ENCODE measurements at regions of chr7 and their contacts with region 1.

Region 1: DNA sequence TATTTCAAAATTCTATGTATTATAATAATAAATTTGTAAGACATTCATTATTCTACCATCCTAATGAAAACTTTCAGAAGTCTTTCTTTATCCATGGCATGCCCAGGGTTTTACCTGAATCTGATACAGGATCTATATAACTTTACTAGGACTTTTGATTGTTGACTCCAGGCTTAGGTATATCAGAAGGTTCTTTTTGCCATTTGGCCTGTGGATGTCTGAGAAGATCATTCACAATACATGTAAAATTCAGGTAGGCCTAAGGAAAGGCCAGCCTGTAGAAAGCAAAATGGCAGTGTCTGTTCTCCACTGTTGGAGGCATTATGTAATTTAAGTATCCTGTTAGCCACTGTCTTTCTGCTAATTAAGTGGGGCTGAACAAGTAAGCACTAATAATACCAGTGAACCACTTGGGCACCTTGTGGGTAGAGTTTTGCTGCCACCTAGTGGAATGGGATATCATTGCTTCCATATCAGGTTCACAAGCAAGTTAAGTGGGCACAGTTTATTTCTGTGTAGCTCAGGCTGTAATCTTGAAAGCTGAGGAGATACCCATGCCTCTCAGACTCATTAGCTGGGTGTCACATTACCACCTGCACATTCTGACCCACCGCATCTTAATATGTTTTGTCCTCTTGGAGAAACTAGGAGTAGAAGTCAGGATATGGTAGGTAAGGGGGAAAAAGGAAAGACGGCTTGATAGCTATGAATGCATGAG is 105.5 kb downstream of the SEPTIN7 start:
- DNase-seq: peak in 39 of 42 donors; percentile 15 to 90 (median 72)

Region 2: GRCh38 chr7:35716038-35716803 is 190.1 kb before region 1 on chr7:
- intact Hi-C with region 1: loop called (anchors 5 kb)
- DNase-seq: peak in 41 of 42 donors; percentile 44 to 88 (median 71)

Region 3: GRCh38 chr7:35801392-35802101 is 104.8 kb before region 1 on chr7:
- intact Hi-C with region 1: loop called (anchors 10 kb)
- DNase-seq: peak; percentile 53 to 90 (median 78)

Region 4: GRCh38 chr7:35831208-35831607 is 75.1 kb before region 1 on chr7:
- intact Hi-C with region 1: no loop called
- DNase-seq: no peak

Region 5: DNA sequence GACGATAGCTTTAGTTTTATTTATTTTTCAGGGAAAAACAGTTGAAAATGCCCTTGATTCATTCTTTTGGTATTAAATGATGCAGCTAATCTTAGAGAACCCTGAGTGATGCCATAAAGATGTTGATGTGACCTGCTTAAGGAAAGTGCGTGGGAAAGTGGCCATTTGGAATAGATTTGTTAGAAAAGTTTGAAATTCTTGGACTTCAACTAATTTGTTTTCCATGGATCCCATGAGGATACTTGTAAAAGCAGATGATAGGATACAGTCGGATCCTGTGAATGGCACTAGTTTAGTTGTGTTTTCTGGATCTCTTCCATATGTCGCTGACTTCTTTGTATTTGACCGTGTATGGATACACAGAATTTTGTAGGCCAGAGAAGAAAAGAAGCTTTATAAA is 36.5 kb before region 1 on chr7:
- intact Hi-C with region 1: no loop called
- DNase-seq: no peak

Region 6: GRCh38 chr7:35975851-35976454 is 69.6 kb after region 1 on chr7:
- intact Hi-C with region 1: loop called (anchors 10 kb)
- DNase-seq: peak in 28 of 42 donors; percentile 20 to 87 (median 65)

Region 7: DNA sequence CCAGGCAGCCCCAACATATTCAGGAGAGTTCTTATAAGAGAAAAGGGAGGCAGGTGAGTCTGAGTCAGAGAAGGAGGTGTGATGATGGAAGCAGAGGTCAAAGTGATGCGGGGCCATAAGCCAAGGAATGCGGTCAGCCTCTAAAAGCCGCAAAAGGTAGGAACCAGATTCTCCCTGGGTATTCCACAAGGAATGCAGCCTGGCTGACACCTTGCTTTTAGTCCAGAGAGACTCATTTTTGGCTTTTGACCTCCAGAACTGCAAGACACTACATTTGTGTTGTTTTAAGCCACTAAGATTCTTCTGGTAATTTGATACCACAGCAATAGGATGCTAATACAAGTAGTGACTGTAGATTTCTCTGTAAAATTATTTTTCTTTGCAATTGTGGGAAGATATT is 95.2 kb after region 1 on chr7:
- intact Hi-C with region 1: no loop called
- DNase-seq: no peak

Region 8: DNA sequence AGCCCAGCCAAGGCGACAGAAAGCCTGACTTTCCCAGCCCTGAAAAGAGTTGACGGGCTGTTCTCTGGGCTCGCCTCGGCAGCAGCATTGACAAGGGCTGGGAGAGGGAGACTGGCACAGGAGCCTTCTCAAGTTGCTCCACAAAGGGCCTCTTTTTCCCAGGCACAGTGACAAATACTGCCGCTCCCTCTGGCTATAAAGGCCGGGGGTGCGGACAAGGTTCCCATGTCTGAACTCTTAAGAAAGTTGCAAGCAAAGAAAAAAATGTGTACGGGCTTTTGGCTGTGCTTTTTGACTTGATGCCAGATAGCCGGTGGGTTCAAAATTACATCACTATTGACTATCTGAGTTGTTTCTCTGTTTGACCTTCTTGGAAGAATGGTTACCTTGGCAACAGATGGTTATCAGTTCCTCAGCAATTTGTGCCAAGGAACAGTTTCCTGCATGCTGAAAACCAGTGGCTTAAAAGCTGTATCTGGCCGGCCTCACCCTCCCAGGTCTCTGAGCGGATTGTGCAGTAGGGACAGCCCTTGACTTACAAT is 130.8 kb after region 1 on chr7:
- intact Hi-C with region 1: no loop called
- DNase-seq: peak in 40 of 42 donors; percentile 16 to 87 (median 52)

Measured in head of caudate nucleus (tissue), 42 donors.